GM10248 (cell line): ENCODE measurements at regions of chr11 and their contacts with region 1.

Region 1: DNA sequence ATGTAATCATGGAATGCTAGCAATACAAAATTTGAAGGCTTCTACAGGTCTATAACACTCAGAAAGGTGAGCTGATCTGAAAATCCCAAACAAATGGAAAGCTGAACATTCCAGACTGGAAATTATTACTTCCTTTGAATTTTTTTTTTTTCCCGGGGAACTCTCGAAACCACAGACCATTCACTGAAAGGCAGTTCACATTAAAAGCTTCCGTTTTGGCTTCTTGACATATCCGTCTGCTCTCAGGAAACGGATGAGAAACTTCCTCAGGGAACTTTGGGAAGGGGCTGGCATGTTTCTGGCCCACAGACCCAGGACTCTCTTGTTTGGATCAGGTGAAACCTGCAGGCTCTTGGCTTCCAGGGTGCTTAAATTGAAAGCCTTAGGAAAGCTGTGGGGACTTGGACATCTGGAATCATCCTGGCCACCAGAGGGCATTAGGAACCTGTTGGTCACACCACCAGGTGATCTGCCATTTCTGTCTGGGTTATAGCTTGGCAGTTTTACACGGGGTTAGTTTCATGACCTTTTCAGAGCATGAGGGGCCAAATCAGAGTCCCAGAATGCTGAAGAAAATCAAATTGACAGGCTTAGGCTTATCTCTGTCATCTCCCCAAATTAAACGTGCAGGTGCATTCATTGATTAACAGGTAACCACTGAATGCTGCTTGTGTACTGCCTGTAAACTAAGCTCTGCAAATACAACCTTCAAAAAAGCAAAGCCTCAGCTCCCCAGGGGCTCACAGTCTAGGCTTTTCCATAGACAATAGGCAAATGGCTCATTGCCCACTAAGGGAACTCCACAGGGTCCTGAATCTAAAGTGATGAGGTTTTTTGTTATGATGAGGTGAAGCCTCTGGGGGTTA is 22.7 kb upstream of the GRAMD1B start:
- DNase-seq: peak; percentile 44
- CTCF ChIP-seq: peak; percentile 68

Region 2: GRCh38 chr11:123357961-123358841 is 49.2 kb before region 1 on chr11:
- CTCF ChIA-PET with region 1: interaction called, 12 read pairs
- POLR2A ChIA-PET with region 1: no interaction called
- DNase-seq: peak; percentile 68
- CTCF ChIP-seq: peak; percentile 38

Region 3: DNA sequence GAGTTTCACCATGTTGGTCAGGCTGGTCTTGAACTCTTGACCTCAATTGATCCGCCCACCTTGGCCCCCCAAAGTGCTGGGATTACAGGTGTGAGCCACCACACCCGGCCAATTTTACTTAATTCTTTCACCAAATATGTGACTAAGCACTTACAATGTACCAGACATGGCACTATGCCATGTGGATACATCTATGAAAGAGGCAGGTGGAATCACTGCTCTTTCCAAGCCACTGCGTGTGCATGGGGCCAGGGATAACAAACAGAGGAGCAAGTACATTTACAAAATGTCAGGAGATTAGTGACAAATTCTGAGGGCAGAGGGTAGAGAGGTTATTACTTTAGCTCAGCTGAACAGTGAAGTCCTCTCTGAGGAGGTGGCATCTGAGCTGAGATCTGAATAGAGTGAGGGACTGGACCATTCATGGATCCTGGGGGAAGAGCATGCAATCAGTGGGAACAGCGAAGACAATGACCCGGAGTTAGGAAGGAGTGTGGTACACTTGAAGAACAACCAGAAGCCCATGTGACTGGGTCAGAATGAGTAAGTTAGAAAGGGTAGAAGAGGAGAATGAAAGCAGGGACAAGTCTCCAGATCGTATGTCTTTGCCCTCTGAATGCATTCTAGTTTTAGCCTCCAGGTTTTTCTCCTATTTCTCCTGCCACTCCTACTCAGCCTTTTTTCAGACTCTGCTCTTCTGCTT is 15.6 kb before region 1 on chr11:
- CTCF ChIA-PET with region 1: interaction called, 101 read pairs
- POLR2A ChIA-PET with region 1: interaction called, 5 read pairs
- DNase-seq: no peak
- CTCF ChIP-seq: no peak

Region 4: GRCh38 chr11:123429913-123430720 is 22.8 kb after region 1 on chr11 and contains the start of gene GRAMD1B:
- CTCF ChIA-PET with region 1: interaction called, 51 read pairs
- POLR2A ChIA-PET with region 1: no interaction called
- DNase-seq: peak; percentile 78
- CTCF ChIP-seq: peak; percentile 22

Region 5: GRCh38 chr11:123450623-123451022 is 43.3 kb after region 1 on chr11:
- CTCF ChIA-PET with region 1: interaction called, 11 read pairs
- POLR2A ChIA-PET with region 1: no interaction called
- DNase-seq: no peak
- CTCF ChIP-seq: no peak

Region 6: DNA sequence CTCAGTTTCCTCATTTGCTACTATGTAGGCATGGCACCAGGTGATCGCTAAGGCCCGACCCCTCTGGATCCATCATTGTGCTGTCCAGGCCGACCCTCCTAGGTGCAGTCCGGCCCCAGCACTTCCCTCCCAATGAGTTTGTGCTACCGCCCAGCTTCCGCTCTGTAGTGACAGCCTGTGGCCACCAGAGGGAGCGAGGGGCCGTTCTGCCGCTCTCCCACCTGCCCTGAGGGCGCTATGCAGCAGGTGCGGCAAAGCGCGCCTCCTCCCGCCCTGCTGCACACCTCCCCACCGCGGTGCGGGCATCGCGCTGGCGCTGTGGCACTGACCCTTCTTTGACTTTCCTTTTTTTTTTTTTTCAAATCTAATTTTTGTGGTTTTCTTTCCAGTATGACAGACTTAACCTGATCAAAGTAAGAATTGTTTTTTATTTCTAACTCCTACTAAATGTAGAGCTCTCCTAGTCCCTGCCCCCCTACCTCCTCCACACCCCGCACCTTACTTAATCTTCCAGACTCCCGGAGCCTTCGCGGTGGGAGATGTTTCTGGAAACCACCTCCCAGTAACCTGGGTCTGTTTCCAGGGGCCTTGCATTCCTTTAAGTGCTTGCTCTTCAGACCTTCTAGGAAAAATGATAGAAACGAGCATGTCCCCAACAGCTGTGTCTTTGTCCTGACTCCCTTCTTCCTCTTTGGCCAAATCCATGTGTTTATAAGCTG is 173.4 kb after region 1 on chr11:
- CTCF ChIA-PET with region 1: interaction called, 19 read pairs
- POLR2A ChIA-PET with region 1: no interaction called
- DNase-seq: peak; percentile 88
- CTCF ChIP-seq: peak; percentile 97

Region 7: GRCh38 chr11:123672568-123672967 is 265.2 kb after region 1 on chr11:
- CTCF ChIA-PET with region 1: no interaction called
- POLR2A ChIA-PET with region 1: no interaction called
- DNase-seq: no peak
- CTCF ChIP-seq: no peak